ENCODE measurements at regions of chr18 and their contacts with region 1.

Region 1: GRCh38 chr18:49834258-49834657 is 20.9 kb upstream of the ACAA2 start:
- DNase-seq: no peak
- ATAC-seq: no peak
- H3K4me3 ChIP-seq: no peak overlapping the region
- H3K27ac ChIP-seq: peak overlapping the region; percentile 20; the same call in 1 of the 2 replicates
- H3K4me1 ChIP-seq: peaks cover 40% of the 10 kb centered on the region
- H3K27me3 ChIP-seq: no peaks in the 10 kb centered on the region
- CTCF ChIP-seq: no peak

Region 2: GRCh38 chr18:49813319-49814146 is 20.7 kb before region 1 on chr18 and contains the start of gene ACAA2:
- CTCF ChIA-PET with region 1: no interaction called
- POLR2A ChIA-PET with region 1: interaction called, 6 read pairs
- intact Hi-C with region 1: loop called (anchors 2 kb)
- DNase-seq: peak; percentile 67
- ATAC-seq: peak; percentile 90
- H3K4me3 ChIP-seq: peak within 1 kb of the TSS; percentile 75
- H3K27ac ChIP-seq: peak within 1 kb of the TSS; percentile 51
- H3K4me1 ChIP-seq: no peaks in the 10 kb centered on the region; the same call in 1 of the 2 replicates
- H3K27me3 ChIP-seq: no peaks in the 10 kb centered on the region
- CTCF ChIP-seq: no peak
- total RNA-seq, gene ACAA2: 6.5 and 7.1 TPM in 2 replicates

Region 3: DNA sequence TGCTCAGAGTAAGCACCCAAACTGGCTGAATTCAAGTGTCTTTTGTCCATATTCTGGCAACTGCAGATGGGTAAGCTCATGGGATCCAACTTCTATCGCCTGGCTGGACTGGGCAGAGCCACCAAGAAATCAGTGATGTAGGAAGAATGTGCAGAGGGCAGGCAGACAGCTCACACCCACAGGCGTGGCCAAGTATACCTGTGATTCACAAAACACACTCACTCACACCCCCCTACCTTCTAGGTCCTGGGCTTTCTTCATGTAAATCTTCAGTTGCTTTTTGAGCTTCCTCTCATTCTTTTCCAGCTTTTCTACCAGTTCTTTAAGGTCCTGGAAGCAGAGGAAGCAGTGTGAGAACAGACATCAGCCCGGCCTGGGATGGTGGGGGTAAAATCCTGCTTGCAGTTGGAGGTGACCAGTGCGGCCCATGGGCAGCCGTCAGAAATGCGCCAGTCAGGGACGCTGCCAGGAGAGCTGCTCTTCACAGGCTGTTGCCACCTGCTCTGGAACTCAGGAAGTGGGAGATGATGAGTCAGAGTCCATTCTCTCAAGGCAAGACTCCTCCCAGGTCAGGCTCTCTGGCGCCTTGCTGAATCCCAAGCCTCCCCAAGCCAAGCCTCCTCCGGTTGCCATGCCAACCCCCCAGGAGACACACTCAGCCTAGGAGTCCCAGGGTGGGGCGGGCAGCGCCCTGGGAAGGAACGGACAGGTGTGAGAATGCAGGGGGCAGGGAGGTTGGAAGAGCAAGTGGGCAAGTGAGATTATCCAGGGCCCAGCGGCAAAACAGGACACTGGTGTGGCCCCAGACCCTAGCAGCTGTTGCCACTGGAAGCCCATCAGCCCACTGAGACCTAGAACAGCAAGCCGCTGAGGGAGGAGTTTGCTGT is 15.3 kb after region 1 on chr18:
- CTCF ChIA-PET with region 1: no interaction called
- POLR2A ChIA-PET with region 1: no interaction called
- intact Hi-C with region 1: loop called (anchors 1 kb)
- DNase-seq: peak; percentile 87
- ATAC-seq: peak; percentile 91
- H3K4me3 ChIP-seq: peak overlapping the region; percentile 26
- H3K27ac ChIP-seq: peak overlapping the region; percentile 90
- H3K4me1 ChIP-seq: peaks cover 17% of the 10 kb centered on the region
- H3K27me3 ChIP-seq: no peaks in the 10 kb centered on the region
- CTCF ChIP-seq: no peak

Region 4: GRCh38 chr18:50374753-50375391 is 540.6 kb after region 1 on chr18 and contains the start of gene SKA1:
- CTCF ChIA-PET with region 1: no interaction called
- POLR2A ChIA-PET with region 1: no interaction called
- intact Hi-C with region 1: no loop called
- DNase-seq: peak; percentile 79
- ATAC-seq: peak; percentile 96
- H3K4me3 ChIP-seq: peak within 1 kb of the TSS; percentile 85
- H3K27ac ChIP-seq: no peak within 1 kb of the TSS
- H3K4me1 ChIP-seq: peaks cover 18% of the 10 kb centered on the region; the same call in 1 of the 2 replicates
- H3K27me3 ChIP-seq: no peaks in the 10 kb centered on the region
- CTCF ChIP-seq: no peak
- total RNA-seq, gene SKA1: 11.6 and 17.2 TPM in 2 replicates

Measured in PC-3 (cell line).